HepG2 (cell line): ENCODE measurements at regions of chr16 and their contacts with region 1.

Region 1: GRCh38 chr16:30534368-30535105 is at the start of gene ZNF747:
- DNase-seq: peak; percentile 92
- ATAC-seq: peak; percentile 84
- H3K4me3 ChIP-seq: peak within 1 kb of the TSS; percentile 75 to 93 (median 81)
- H3K27ac ChIP-seq: peak within 1 kb of the TSS; percentile 85
- H3K4me1 ChIP-seq: peaks cover 68% of the 10 kb centered on the region
- H3K27me3 ChIP-seq: no peaks in the 10 kb centered on the region; a peak in 1 of 5 replicates
- CTCF ChIP-seq: peak; percentile 47
- EP300 ChIP-seq: peak; percentile 22 to 47; a peak in 2 of 4 replicates
- POLR2A ChIP-seq: peak; percentile 72 to 87
- RAD21 ChIP-seq: no peak; the same call in none of the 2 replicates
- total RNA-seq, gene ZNF747: 8.8 and 10.2 TPM in 2 replicates

Region 2: GRCh38 chr16:30565526-30565925 is 31.0 kb after region 1 on chr16:
- CTCF ChIA-PET with region 1: no interaction called
- POLR2A ChIA-PET with region 1: interaction called, 34 read pairs
- in situ Hi-C with region 1: no loop called
- intact Hi-C with region 1: loop called (anchors 1 kb)
- DNase-seq: no peak
- ATAC-seq: no peak
- H3K4me3 ChIP-seq: no peak overlapping the region; a peak in 1 of 6 replicates
- H3K27ac ChIP-seq: no peak overlapping the region
- H3K4me1 ChIP-seq: peaks cover 45% of the 10 kb centered on the region
- H3K27me3 ChIP-seq: no peaks in the 10 kb centered on the region
- CTCF ChIP-seq: no peak
- EP300 ChIP-seq: no peak
- POLR2A ChIP-seq: no peak
- RAD21 ChIP-seq: no peak

Region 3: GRCh38 chr16:30602616-30603277 is 68.2 kb after region 1 on chr16:
- CTCF ChIA-PET with region 1: interaction called, 5 read pairs
- POLR2A ChIA-PET with region 1: interaction called, 9 read pairs
- in situ Hi-C with region 1: no loop called
- intact Hi-C with region 1: loop called (anchors 2 kb)
- DNase-seq: no peak
- ATAC-seq: no peak
- H3K4me3 ChIP-seq: no peak overlapping the region
- H3K27ac ChIP-seq: no peak overlapping the region
- H3K4me1 ChIP-seq: peaks cover 27% of the 10 kb centered on the region
- H3K27me3 ChIP-seq: no peaks in the 10 kb centered on the region
- CTCF ChIP-seq: no peak
- EP300 ChIP-seq: no peak
- POLR2A ChIP-seq: 0 out of 4 replicates have a peak, but pooled peaks of 1 of the 2 experiments have one; percentile 29
- RAD21 ChIP-seq: no peak